ENCODE measurements at regions of chr5 and their contacts with region 1.

Region 1: GRCh38 chr5:90783460-90784333 is 225.1 kb downstream of the ADGRV1 start:
- DNase-seq: peak; percentile 78
- H3K4me3 Mint-ChIP-seq: no peak overlapping the region
- H3K27ac Mint-ChIP-seq: no peak overlapping the region
- H3K4me1 Mint-ChIP-seq: no peaks in the 10 kb centered on the region
- H3K27me3 Mint-ChIP-seq: peaks cover 88% of the 10 kb centered on the region
- CTCF ChIP-seq: peak; percentile 85

Region 2: GRCh38 chr5:90434116-90434714 is 349.5 kb before region 1 on chr5:
- CTCF ChIA-PET with region 1: interaction called, 6 read pairs
- POLR2A ChIA-PET with region 1: no interaction called
- intact Hi-C with region 1: loop called (anchors 2 kb)
- DNase-seq: peak; percentile 54
- H3K4me3 Mint-ChIP-seq: no peak overlapping the region
- H3K27ac Mint-ChIP-seq: no peak overlapping the region
- H3K4me1 Mint-ChIP-seq: no peaks in the 10 kb centered on the region
- H3K27me3 Mint-ChIP-seq: peaks cover 15% of the 10 kb centered on the region
- CTCF ChIP-seq: peak; percentile 41

Region 3: GRCh38 chr5:90606539-90606938 is 177.2 kb before region 1 on chr5:
- CTCF ChIA-PET with region 1: interaction called, 3 read pairs
- POLR2A ChIA-PET with region 1: no interaction called
- intact Hi-C with region 1: loop called (anchors 2 kb)
- DNase-seq: peak; percentile 21
- H3K4me3 Mint-ChIP-seq: no peak overlapping the region
- H3K27ac Mint-ChIP-seq: no peak overlapping the region
- H3K4me1 Mint-ChIP-seq: peaks cover 5% of the 10 kb centered on the region
- H3K27me3 Mint-ChIP-seq: peaks cover 87% of the 10 kb centered on the region
- CTCF ChIP-seq: no peak

Region 4: GRCh38 chr5:90740244-90740799 is 43.4 kb before region 1 on chr5:
- CTCF ChIA-PET with region 1: interaction called, 10 read pairs
- POLR2A ChIA-PET with region 1: no interaction called
- intact Hi-C with region 1: no loop called
- DNase-seq: no peak
- H3K4me3 Mint-ChIP-seq: no peak overlapping the region
- H3K27ac Mint-ChIP-seq: no peak overlapping the region
- H3K4me1 Mint-ChIP-seq: no peaks in the 10 kb centered on the region
- H3K27me3 Mint-ChIP-seq: peaks cover 79% of the 10 kb centered on the region
- CTCF ChIP-seq: no peak

Region 5: GRCh38 chr5:90802474-90803317 is 19.0 kb after region 1 on chr5:
- CTCF ChIA-PET with region 1: interaction called, 27 read pairs
- POLR2A ChIA-PET with region 1: interaction called, 3 read pairs
- intact Hi-C with region 1: no loop called
- DNase-seq: peak; percentile 62
- H3K4me3 Mint-ChIP-seq: no peak overlapping the region
- H3K27ac Mint-ChIP-seq: no peak overlapping the region
- H3K4me1 Mint-ChIP-seq: no peaks in the 10 kb centered on the region
- H3K27me3 Mint-ChIP-seq: peaks cover 14% of the 10 kb centered on the region
- CTCF ChIP-seq: peak; percentile 65

Region 6: GRCh38 chr5:90824436-90824835 is 40.7 kb after region 1 on chr5:
- CTCF ChIA-PET with region 1: no interaction called
- POLR2A ChIA-PET with region 1: no interaction called
- intact Hi-C with region 1: no loop called
- DNase-seq: no peak
- H3K4me3 Mint-ChIP-seq: no peak overlapping the region
- H3K27ac Mint-ChIP-seq: no peak overlapping the region
- H3K4me1 Mint-ChIP-seq: no peaks in the 10 kb centered on the region
- H3K27me3 Mint-ChIP-seq: no peaks in the 10 kb centered on the region
- CTCF ChIP-seq: no peak